Naive thymus-derived CD4-positive, alpha-beta T cell (primary cell): ENCODE measurements at regions of chr21 and their contacts with region 1.

Region 1: GRCh38 chr21:45130324-45130774 is 56.0 kb downstream of the ADARB1 start:
- DNase-seq: no peak
- ATAC-seq: no peak
- H3K4me3 ChIP-seq: no peak overlapping the region
- H3K4me3 Mint-ChIP-seq: no peak overlapping the region
- H3K27ac ChIP-seq: no peak overlapping the region
- H3K27ac Mint-ChIP-seq: peak overlapping the region in 1 of 9 donors; percentile 33
- H3K4me1 ChIP-seq: peaks cover 0 to 7% of the 10 kb centered on the region in 2 donors
- H3K4me1 Mint-ChIP-seq: peaks cover 18 to 34% (median 27%) of the 10 kb centered on the region in 7 donors
- H3K27me3 ChIP-seq: no peaks in the 10 kb centered on the region
- H3K27me3 Mint-ChIP-seq: no peaks in the 10 kb centered on the region

Region 2: GRCh38 chr21:44892536-44893277 is 237.6 kb before region 1 on chr21:
- CTCF ChIA-PET with region 1: no interaction called
- POLR2A ChIA-PET with region 1: no interaction called
- intact Hi-C with region 1: loop called in 1 of 2 experiments (anchors 2 kb)
- DNase-seq: peak; percentile 59 to 80 (median 76)
- ATAC-seq: peak; percentile 82
- H3K4me3 ChIP-seq: no peak overlapping the region
- H3K4me3 Mint-ChIP-seq: no peak overlapping the region
- H3K27ac ChIP-seq: peak overlapping the region; percentile 21
- H3K27ac Mint-ChIP-seq: peak overlapping the region in 8 of 9 donors; percentile 61 to 89 (median 79)
- H3K4me1 ChIP-seq: peaks cover 7 to 11% of the 10 kb centered on the region in 2 donors
- H3K4me1 Mint-ChIP-seq: peaks cover 13 to 22% (median 16%) of the 10 kb centered on the region in 7 donors
- H3K27me3 ChIP-seq: no peaks in the 10 kb centered on the region
- H3K27me3 Mint-ChIP-seq: no peaks in the 10 kb centered on the region

Region 3: DNA sequence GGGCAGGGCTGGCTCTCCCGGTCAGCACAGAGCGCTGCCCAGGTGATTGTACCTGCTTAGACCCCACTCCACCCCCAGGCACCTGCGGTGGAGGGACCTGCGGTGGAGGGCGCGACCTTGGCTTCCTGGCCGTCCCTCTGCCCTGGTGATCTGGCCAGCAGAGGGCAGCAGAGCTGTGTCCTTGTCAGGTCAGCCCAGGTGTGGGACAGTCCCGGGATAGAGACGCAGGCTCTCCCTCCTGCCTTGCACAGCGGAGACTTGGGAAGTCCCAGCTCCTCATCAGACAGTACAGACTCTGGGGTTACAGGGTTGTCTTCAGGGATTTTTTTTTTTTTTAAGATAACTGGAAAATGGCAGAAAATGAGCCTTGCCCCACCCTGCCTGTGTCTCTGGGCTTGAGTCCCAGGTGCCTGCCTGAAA is 180.6 kb before region 1 on chr21:
- CTCF ChIA-PET with region 1: interaction called, 189 read pairs
- POLR2A ChIA-PET with region 1: interaction called, 6 read pairs
- intact Hi-C with region 1: loop called (anchors 1 kb)
- DNase-seq: peak; percentile 57 to 85 (median 71)
- ATAC-seq: peak; percentile 92
- H3K4me3 ChIP-seq: no peak overlapping the region
- H3K4me3 Mint-ChIP-seq: peak overlapping the region in 1 of 10 donors; percentile 20
- H3K27ac ChIP-seq: no peak overlapping the region
- H3K27ac Mint-ChIP-seq: peak overlapping the region in 1 of 9 donors; percentile 48
- H3K4me1 ChIP-seq: peaks cover 6 to 8% of the 10 kb centered on the region in 2 donors
- H3K4me1 Mint-ChIP-seq: peaks cover 0 to 23% (median 16%) of the 10 kb centered on the region in 7 donors
- H3K27me3 ChIP-seq: no peaks in the 10 kb centered on the region
- H3K27me3 Mint-ChIP-seq: no peaks in the 10 kb centered on the region

Region 4: DNA sequence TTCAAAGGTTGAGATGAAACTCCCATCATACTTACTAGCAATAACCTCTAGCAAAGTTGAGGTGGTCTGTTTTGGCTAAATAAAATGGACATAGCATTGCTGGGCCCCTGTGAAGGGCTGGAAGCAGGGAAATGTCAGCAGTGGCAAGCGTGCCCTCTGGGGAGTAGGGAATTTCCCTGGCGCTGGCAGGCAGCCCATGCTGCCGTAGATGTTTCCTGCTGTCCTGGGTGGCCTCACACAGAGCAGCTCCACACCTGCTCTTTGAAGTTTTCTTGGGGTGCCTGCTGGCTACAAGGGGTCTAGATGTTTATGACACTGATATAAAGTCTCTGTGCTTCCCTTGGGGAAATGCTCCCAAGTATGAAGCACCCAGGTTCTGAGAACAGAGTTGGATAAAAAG is 25.8 kb before region 1 on chr21:
- CTCF ChIA-PET with region 1: interaction called, 18 read pairs
- POLR2A ChIA-PET with region 1: no interaction called
- intact Hi-C with region 1: no loop called
- DNase-seq: peak in 1 of 9 donors; percentile 42
- ATAC-seq: peak; percentile 74
- H3K4me3 ChIP-seq: no peak overlapping the region
- H3K4me3 Mint-ChIP-seq: peak overlapping the region; percentile 24 to 70 (median 61)
- H3K27ac ChIP-seq: no peak overlapping the region
- H3K27ac Mint-ChIP-seq: peak overlapping the region; percentile 3 to 84 (median 64)
- H3K4me1 ChIP-seq: peaks cover 12 to 36% of the 10 kb centered on the region in 2 donors
- H3K4me1 Mint-ChIP-seq: peaks cover 41 to 89% (median 65%) of the 10 kb centered on the region in 7 donors
- H3K27me3 ChIP-seq: no peaks in the 10 kb centered on the region
- H3K27me3 Mint-ChIP-seq: no peaks in the 10 kb centered on the region